A673 (cell line): ENCODE measurements at regions of chr10 and their contacts with region 1.

Region 1: DNA sequence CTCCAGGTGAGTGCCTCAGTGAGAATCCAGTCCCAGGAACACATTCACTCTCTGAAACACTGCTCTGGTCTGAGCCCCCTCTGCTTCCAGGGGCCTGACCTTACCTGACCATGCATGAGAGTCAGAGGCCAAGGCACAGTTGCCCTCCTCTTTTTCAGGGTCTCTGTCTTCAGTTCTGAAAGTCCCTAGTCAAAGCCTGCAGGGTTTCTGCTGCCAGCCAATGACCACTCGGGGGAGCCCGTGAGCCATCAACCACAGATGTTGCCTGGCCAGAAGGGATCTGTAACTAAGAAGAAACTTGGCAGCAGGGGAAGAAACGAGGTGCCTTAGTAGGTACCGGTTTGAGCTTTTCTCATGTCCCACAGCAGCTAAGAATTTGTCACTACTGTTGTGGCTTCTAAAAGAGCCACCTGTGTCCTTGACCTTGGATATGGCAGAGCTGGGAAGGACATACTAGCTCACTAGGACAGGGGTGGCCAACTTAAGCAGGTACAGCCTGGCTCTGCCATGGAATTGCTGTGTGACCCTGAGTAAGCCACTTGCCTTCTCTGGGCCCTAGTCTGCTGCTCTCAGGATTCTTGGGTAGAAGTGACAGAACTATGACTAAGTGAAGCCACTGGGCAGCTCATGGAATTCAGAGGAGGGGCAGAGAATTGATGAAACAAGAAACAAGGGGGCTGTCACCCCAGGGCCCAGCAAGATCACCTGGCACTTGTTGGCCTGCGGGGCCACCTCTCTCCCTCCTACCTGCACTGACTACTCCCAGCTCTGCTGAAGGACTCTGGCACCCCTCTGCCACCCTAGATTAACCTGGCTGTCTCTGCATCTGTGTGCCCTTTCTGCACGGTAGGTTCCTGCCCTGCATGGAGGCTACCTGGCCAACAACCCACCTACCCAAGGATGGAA is 83.8 kb upstream of the GPR26 start:
- DNase-seq: peak; percentile 76
- H3K4me3 ChIP-seq: no peak overlapping the region
- H3K27ac ChIP-seq: no peak overlapping the region
- H3K4me1 ChIP-seq: no peaks in the 10 kb centered on the region
- H3K27me3 ChIP-seq: peaks cover 63% of the 10 kb centered on the region
- CTCF ChIP-seq: peak; percentile 88

Region 2: DNA sequence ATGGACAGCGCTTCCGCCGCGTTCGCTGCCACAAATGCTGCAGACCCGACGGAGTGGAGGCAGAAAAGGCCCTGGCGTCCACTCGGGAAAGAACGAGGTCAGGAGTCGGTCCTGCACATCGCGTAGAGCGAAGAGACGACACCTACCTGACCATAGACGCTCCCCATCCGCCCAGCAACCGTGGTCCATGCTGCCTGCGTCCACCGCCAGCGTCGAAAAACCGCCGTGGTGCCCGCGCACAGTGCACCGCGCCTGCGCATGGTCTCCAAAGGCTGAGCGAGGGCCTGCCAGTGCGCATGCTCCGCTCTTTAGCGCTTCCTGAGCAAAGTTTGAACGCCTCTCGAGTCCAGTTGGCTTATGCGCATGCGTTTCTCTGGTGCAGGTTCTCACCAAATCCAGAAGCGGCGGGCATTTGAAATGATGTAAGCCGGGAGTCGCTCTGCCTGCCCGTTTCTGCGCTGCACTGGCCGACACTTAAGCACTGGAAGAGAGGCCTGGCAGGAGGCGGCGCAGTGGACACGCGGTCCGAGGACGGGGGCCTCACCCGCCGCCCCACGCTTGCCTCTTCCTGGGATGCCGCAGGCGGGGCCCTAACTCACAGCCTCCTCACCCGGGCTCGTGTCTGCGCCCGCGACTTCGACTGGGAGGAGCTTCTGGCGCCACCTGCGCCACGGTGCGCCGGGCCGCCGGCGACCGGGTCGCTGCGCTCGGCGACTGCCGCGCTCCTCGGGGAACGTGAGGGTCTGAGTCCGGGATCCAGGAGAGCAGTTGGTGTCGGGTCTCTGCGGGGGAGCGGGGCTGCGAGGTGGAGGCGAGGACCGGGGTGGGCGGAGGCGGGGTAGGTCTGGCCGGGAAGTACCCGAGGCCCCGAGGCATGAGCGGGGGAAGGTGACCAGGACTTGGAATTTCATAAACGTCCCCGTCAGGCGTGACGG is 702.7 kb before region 1 on chr10 and contains the start of gene FAM24B:
- CTCF ChIA-PET with region 1: no interaction called
- POLR2A ChIA-PET with region 1: no interaction called
- intact Hi-C with region 1: no loop called
- DNase-seq: peak; percentile 98
- H3K4me3 ChIP-seq: peak within 1 kb of the TSS; percentile 69
- H3K27ac ChIP-seq: peak within 1 kb of the TSS; percentile 77
- H3K4me1 ChIP-seq: peaks cover 12% of the 10 kb centered on the region
- H3K27me3 ChIP-seq: no peaks in the 10 kb centered on the region
- CTCF ChIP-seq: no peak
- total RNA-seq, gene FAM24B: 7.0 and 8.0 TPM in 2 replicates

Region 3: GRCh38 chr10:123502983-123503382 is 79.4 kb before region 1 on chr10:
- CTCF ChIA-PET with region 1: no interaction called
- POLR2A ChIA-PET with region 1: no interaction called
- intact Hi-C with region 1: no loop called
- DNase-seq: no peak
- H3K4me3 ChIP-seq: no peak overlapping the region
- H3K27ac ChIP-seq: no peak overlapping the region
- H3K4me1 ChIP-seq: no peaks in the 10 kb centered on the region
- H3K27me3 ChIP-seq: peaks cover 31% of the 10 kb centered on the region
- CTCF ChIP-seq: no peak

Region 4: GRCh38 chr10:123967396-123968243 is 385.3 kb after region 1 on chr10:
- CTCF ChIA-PET with region 1: interaction called, 3 read pairs
- POLR2A ChIA-PET with region 1: no interaction called
- intact Hi-C with region 1: loop called (anchors 1 kb)
- DNase-seq: peak; percentile 65
- H3K4me3 ChIP-seq: no peak overlapping the region
- H3K27ac ChIP-seq: no peak overlapping the region
- H3K4me1 ChIP-seq: no peaks in the 10 kb centered on the region
- H3K27me3 ChIP-seq: peaks cover 75% of the 10 kb centered on the region
- CTCF ChIP-seq: peak; percentile 90